Right ventricle myocardium inferior (tissue), 1 donor: ENCODE measurements at regions of chr6 and their contacts with region 1.

Region 1: DNA sequence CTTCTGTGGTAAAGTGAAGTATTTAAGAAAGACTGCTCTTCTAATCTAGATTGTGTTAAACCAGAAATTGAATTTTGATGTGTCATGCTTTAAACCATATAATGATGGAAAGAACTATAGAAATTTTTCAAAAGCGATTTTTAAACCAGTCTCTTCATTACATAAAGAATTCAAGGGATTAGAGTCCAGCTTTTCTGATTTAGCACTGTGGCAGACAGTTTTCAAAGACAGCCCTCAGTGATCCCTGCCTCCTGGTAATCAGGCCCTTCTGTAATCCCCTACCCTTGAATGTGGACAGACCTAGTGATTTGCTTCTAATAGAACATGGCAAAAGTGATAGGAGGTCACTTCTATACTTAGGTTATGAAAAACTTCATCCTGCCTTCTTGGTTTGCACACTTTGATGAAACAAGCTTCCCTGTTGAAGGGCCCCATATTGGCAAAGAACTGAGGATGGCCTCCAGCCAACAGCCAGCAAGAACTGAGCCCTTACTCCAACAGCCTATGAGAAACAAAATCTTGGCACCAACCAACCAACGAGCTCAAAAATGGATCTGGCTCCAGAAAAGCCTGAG is 191.4 kb downstream of the DST start:
- DNase-seq: peak; percentile 82
- ATAC-seq: peak; percentile 86

Region 2: GRCh38 chr6:56370561-56371211 is 80.6 kb before region 1 on chr6:
- intact Hi-C with region 1: loop called (anchors 2 kb)
- DNase-seq: no peak
- ATAC-seq: peak; percentile 58

Region 3: DNA sequence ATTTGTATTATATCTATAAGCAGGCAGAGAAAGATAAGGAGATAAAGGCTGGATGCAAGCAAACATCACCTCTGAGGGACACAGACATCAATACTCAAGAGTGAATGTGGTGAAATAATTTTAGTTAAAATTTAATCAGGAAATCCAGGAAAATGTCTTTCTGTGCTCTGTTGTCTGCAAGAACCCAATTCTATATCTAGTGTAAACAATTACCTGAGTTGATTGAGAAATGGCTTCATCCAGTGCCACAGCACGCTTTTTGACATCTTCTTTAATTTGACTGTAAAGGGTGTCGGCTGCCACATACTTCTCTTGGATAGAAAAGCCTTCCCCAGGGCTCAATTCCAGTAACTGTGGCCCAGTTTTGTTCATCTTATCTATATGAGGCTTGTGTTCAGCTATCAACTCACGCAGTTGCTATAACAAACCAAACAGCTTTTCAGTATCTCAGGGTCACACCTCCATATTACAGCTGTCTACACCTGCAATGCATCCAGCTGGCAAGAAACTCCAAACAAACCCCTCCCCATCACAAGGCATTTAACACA is 59.8 kb after region 1 on chr6:
- intact Hi-C with region 1: no loop called
- DNase-seq: peak; percentile 57
- ATAC-seq: peak; percentile 88